Activated T-helper 1 cell treated with anti-CD3 and anti-CD28 coated beads, Interleukin-12 subunit alpha, Interleukin-12 subunit beta, Interleukin-2, Interleukin-4 antibody, amounts not matched to agents 30 ng/mL and 10 ng/mL and 1 ng/mL, durations not matched to agents 14 hours and 24 hours and 36 hours (primary cell): ENCODE measurements at regions of chr4 and their contacts with region 1.

Region 1: DNA sequence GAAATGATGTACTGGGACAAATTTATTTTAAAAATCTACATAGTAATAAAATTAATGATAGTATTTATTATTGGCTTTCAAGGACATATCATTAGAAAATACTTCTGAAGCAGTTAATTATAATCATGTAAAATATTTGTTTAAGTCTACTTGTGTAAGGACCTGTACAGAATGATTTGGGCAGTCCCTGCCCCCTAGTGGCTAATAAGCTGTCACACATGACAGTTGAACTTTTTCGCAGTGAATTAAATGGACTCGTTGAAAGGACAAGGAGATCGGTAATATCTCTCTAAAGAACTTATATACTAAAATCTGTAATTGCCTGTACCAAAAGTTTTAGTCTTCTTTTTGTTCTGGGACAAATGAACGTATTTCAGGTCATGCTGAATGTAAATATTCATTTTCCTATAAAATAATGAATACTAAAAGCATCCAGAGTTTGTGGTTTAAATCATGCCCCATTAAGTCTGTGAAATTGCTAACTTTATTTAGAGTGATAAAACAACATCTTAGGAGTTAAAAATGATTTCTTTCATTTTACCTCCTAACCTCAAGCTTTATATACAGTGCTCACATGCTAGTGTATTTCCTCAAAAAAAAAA is 13.6 kb downstream of the EXOC1 start:
- DNase-seq: no peak
- H3K4me3 Mint-ChIP-seq: no peak overlapping the region
- H3K27ac Mint-ChIP-seq: peak overlapping the region; percentile 24
- H3K4me1 Mint-ChIP-seq: peaks cover 21% of the 10 kb centered on the region
- H3K27me3 Mint-ChIP-seq: no peaks in the 10 kb centered on the region

Region 2: GRCh38 chr4:55345980-55346850 is 520.9 kb before region 1 on chr4 and contains the start of gene SRD5A3:
- intact Hi-C with region 1: loop called (anchors 1 kb)
- DNase-seq: peak; percentile 74
- H3K4me3 Mint-ChIP-seq: peak within 1 kb of the TSS; percentile 89
- H3K27ac Mint-ChIP-seq: peak within 1 kb of the TSS; percentile 92
- H3K4me1 Mint-ChIP-seq: peaks cover 36% of the 10 kb centered on the region
- H3K27me3 Mint-ChIP-seq: no peaks in the 10 kb centered on the region
- total RNA-seq, gene SRD5A3: 32.4 and 33.2 TPM in 2 replicates

Region 3: GRCh38 chr4:55754754-55755350 is 112.2 kb before region 1 on chr4:
- intact Hi-C with region 1: loop called (anchors 10 kb)
- DNase-seq: no peak
- H3K4me3 Mint-ChIP-seq: no peak overlapping the region
- H3K27ac Mint-ChIP-seq: no peak overlapping the region
- H3K4me1 Mint-ChIP-seq: no peaks in the 10 kb centered on the region
- H3K27me3 Mint-ChIP-seq: no peaks in the 10 kb centered on the region

Region 4: GRCh38 chr4:55887594-55887993 is 20.5 kb after region 1 on chr4:
- intact Hi-C with region 1: no loop called
- DNase-seq: no peak
- H3K4me3 Mint-ChIP-seq: no peak overlapping the region
- H3K27ac Mint-ChIP-seq: no peak overlapping the region
- H3K4me1 Mint-ChIP-seq: peaks cover 9% of the 10 kb centered on the region
- H3K27me3 Mint-ChIP-seq: no peaks in the 10 kb centered on the region

Region 5: DNA sequence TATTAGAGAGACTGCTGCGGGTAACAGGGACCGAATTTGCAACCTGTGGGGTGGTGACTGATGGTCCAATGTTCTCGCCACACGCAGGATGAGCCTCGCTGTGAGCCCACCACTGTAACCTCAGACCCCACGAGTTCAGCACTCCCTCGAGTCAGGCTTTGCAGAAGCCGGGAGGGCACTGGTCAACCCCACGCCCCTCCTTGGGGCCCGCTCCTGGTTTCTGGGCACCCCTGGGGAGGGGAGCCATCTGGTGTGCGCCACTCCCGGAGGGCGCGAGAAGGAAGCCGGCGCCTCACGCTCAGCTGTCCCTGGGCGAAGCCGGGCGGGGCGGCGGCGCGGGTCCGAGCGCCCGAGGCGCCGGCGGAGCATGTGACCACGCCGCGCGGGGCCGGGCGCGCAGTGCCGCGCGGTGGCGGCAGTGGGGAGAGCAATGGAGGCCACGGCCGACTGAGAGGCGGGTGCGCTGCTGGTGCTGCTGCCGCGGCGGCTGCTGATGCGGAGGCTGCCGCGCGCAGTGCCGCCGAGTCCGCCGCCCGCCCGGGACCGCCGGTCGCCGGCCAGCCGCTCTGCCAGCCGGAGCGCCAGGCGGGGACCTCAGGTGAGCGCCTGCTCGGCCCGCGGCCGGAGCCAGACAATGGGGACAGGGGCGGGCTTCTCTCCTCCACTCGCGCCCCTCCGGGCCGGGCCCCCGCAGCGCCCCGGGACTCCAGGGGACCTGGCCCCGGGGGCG is 181.8 kb after region 1 on chr4:
- intact Hi-C with region 1: loop called (anchors 1 kb)
- DNase-seq: peak; percentile 50
- H3K4me3 Mint-ChIP-seq: peak overlapping the region; percentile 77
- H3K27ac Mint-ChIP-seq: no peak overlapping the region
- H3K4me1 Mint-ChIP-seq: peaks cover 13% of the 10 kb centered on the region
- H3K27me3 Mint-ChIP-seq: peaks cover 50% of the 10 kb centered on the region

Region 6: DNA sequence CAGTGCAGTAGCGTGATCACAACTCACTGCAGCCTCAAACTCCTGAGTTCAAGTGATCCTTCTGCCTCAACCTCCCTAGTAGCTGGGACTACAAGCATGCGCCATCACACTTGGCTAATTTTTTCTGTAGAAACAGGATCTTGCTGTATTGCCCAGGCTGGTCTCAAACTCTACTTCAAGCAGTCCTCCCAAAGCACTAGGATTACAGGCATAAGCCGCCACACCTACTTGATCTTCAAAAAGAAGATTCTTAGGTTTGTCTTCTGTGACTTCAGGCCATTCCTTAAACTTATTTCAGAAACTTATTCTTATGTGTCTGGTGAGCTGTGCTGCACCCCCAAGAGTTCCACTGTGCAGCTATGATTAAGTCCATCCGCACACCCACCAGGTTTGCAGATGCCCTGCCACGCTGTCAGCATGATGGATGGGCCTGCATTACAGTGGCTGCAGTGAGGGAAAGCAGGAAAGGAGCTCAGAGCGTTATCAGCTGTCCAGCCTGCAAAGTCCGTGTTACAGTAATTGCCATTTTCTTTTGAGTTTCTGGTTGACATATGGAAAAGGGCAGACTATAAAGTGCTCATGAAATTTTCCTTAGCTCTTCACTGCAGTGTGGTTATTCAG is 373.6 kb after region 1 on chr4:
- intact Hi-C with region 1: no loop called
- DNase-seq: no peak
- H3K4me3 Mint-ChIP-seq: no peak overlapping the region
- H3K27ac Mint-ChIP-seq: no peak overlapping the region
- H3K4me1 Mint-ChIP-seq: no peaks in the 10 kb centered on the region
- H3K27me3 Mint-ChIP-seq: no peaks in the 10 kb centered on the region